Mammary epithelial cell (primary cell): ENCODE measurements at regions of chr5 and their contacts with region 1.

Region 1: DNA sequence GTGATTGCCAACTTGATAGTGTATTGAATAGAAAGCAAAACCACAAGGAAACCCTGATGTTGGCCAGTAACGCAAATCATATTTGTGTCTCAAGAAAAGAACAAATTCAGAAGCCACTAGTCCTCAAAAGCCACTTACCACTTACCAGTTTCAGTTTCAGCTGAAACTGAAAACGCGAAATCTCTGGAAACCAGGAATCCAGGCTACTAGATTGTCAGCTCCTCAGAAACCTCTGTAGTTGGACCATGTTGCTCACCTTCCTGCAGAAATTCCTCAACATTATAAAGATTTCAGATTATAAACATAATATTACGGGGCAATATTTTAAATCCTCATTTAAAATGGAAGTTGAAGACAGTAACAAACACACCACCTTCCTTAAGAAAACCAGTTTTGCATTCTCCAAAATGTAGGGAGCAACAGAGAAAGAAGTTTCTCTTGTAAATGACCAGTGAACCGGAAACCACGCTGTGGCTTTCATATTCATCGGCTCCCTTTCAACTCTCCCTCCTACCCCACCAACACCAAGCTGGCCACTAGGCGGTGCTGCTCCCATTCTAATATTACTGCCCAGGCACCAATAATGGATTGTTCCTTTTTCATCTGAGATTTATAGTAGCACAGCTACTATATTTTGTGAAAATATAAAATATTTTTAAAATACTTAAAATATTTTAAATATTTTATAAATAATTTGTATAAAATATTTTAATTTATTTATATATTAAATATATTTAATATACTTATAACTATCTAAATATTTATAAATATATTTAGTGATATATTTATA is 8.7 kb upstream of the TMED7 start:
- DNase-seq: peak; percentile 68
- H3K4me3 ChIP-seq: peak overlapping the region; percentile 10 to 48 (median 21)
- H3K27ac ChIP-seq: peak overlapping the region; percentile 24
- H3K4me1 ChIP-seq: peaks cover 9% of the 10 kb centered on the region
- H3K27me3 ChIP-seq: no peaks in the 10 kb centered on the region
- CTCF ChIP-seq: peak; percentile 92 to 97

Region 2: GRCh38 chr5:115666023-115666422 is 31.5 kb after region 1 on chr5:
- CTCF ChIA-PET with region 1: no interaction called
- dilution Hi-C with region 1: no loop called
- in situ Hi-C with region 1: no loop called
- intact Hi-C with region 1: loop called (anchors 1 kb)
- DNase-seq: peak; percentile 46
- H3K4me3 ChIP-seq: no peak overlapping the region
- H3K27ac ChIP-seq: no peak overlapping the region
- H3K4me1 ChIP-seq: peaks cover 6% of the 10 kb centered on the region
- H3K27me3 ChIP-seq: no peaks in the 10 kb centered on the region
- CTCF ChIP-seq: peak; percentile 5 to 36

Region 3: GRCh38 chr5:115831163-115831768 is 196.7 kb after region 1 on chr5:
- CTCF ChIA-PET with region 1: interaction called, 7 read pairs
- dilution Hi-C with region 1: no loop called
- in situ Hi-C with region 1: loop called in 1 of 2 experiments (anchors 10 kb)
- intact Hi-C with region 1: loop called (anchors 1 kb)
- DNase-seq: peak; percentile 19
- H3K4me3 ChIP-seq: no peak overlapping the region
- H3K27ac ChIP-seq: no peak overlapping the region
- H3K4me1 ChIP-seq: no peaks in the 10 kb centered on the region
- H3K27me3 ChIP-seq: no peaks in the 10 kb centered on the region
- CTCF ChIP-seq: peak; percentile 81

Region 4: GRCh38 chr5:116068028-116068632 is 433.6 kb after region 1 on chr5:
- CTCF ChIA-PET with region 1: no interaction called
- dilution Hi-C with region 1: no loop called
- in situ Hi-C with region 1: loop called in 1 of 2 experiments (anchors 10 kb)
- intact Hi-C with region 1: loop called (anchors 1 kb)
- DNase-seq: peak; percentile 14
- H3K4me3 ChIP-seq: no peak overlapping the region
- H3K27ac ChIP-seq: no peak overlapping the region
- H3K4me1 ChIP-seq: no peaks in the 10 kb centered on the region
- H3K27me3 ChIP-seq: peaks cover 3% of the 10 kb centered on the region
- CTCF ChIP-seq: peak; percentile 71 to 77